ENCODE measurements at regions of chr20 and their contacts with region 1.

Region 1: GRCh38 chr20:3767427-3768341 is at the start of gene ADISSP:
- DNase-seq: peak; percentile 100
- ATAC-seq: peak; percentile 96
- total RNA-seq, gene ADISSP: 14.6 TPM

Region 2: GRCh38 chr20:3716195-3716834 is 51.4 kb before region 1 on chr20:
- intact Hi-C with region 1: loop called (anchors 2 kb)
- DNase-seq: no peak
- ATAC-seq: peak; percentile 61